ENCODE measurements at regions of chr7 and their contacts with region 1.

Region 1: GRCh38 chr7:26337232-26337865 is 45.7 kb downstream of the SNX10 start:
- DNase-seq: no peak

Region 2: DNA sequence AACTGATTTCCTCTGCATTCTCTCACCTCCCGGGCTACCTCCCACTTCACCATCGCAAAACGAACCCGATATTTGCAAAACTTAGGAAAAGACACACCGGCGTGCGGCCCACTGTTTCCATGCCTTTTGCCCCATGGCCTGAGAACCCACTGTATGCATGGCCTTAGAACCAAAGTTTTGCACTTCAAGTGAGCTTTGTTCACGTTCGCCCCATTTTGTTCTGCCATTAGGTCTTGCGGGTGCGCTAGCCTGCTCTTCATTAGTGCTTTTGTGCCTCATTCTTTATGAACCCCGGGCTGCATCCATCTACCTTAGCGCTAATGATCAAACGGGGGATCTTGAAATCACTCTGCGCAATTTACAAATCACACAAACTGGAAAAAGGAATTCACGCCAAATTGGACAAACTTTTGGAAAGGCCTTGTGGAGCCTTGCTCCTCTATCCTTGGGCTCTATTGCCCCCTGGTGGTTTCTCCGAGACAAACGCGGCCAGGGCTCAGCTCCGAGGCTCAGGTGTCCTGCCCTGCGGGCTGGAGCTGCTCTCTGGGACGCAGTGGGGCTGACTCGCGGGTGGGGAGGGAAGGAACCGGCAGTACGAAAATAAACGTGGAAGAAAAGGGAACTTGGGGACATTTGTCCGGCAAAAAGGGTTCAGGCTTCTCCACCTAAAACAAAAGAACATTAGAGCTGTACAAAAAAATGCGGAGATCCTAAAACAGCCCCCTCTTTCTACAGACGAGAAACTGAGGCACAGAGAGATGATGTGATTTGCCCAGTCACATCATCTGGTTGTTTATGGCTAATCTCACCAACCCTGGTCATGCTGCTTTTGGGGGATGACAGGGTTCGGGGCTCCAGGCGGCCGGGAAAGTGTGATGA is 485.8 kb before region 1 on chr7:
- CTCF ChIA-PET with region 1: no interaction called
- POLR2A ChIA-PET with region 1: no interaction called
- DNase-seq: peak; percentile 70

Region 3: DNA sequence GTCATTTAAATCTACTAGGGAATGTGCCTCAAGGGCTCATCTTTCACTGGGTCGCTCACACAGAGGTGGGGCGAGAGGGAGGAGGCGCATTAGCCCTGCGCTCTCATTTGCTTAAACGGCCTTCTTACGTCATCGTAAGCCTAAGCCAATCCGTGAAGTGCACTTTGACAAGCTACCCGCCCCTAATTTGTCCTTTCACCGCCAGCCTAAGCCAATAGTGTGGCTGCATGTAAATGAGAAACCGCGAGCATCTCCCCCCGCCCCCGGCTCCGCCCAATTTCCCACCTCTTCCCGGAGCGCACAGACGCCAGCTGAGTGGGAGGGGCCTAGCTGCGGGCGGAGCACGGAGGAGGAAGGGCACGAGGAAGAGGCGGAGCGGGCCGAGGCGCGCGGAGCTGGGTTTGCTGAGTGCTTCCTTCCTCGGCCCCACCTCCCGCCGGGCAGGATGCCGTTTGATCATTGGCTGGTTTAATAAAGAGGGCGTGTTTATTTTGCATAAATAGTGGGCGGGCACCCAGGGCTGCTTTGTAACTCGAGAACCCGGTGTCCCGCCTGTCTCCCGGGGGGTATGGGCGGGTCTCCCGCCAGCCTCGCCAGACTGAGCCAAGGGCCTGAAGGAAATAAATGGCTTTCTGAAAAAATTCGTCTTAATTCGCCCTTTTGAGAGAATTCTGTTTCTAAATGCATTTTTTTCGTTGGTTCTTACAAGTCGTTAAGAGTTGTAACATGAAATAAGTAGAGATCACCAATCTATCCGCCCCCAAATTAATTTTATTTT is 474.9 kb before region 1 on chr7:
- CTCF ChIA-PET with region 1: interaction called, 11 read pairs
- POLR2A ChIA-PET with region 1: no interaction called
- DNase-seq: peak; percentile 94

Region 4: GRCh38 chr7:26061688-26062150 is 275.6 kb before region 1 on chr7:
- CTCF ChIA-PET with region 1: no interaction called
- POLR2A ChIA-PET with region 1: no interaction called
- DNase-seq: peak; percentile 78

Region 5: DNA sequence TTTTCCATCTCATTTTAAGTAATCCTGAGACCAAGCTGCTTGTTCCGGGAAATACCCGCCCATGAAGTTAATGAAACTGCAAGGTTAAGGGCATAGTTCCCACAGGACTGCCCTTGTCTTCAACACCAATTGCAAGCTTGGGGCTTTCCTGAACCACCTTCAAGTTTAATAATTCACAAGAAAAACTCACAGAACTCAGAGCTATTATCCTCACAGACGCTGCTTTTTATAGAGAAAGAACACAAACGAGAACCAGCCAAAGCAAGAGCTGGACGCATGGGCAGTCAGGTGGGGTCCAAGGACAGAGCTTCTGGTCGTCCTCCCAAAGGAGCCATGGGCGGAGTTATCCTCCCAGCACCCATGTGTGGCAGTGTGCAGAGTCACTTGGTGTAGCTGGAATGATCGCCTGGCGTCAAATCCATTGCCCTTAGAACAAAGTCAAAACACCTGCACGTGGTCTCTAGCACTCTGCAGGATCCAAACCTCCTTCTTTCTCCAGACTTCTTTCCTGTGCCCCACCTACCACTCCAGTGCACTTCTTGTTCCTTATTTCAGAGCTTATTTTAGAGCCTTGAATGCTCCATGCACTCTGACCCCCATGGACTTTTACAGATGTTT is 11.0 kb after region 1 on chr7:
- CTCF ChIA-PET with region 1: no interaction called
- POLR2A ChIA-PET with region 1: no interaction called
- DNase-seq: no peak

Region 6: DNA sequence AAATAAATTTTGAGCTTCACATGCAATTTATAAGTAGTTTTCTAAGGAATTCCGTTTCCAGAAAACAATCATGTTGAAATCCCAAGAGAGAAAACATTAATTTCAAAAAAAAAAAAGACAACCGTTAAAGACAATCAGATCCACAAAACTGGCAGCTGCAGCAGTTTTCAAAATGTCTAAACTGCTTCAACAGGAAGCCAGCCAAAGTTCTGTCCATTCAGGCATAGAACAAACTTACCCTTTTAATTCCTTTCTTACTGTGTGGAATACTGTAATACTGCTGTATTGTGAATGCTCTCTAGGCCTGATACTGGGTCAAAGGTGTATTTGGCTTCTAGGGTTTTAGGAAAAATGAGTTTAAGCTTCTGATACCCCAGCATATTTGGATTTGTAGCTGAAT is 726.8 kb after region 1 on chr7:
- CTCF ChIA-PET with region 1: no interaction called
- POLR2A ChIA-PET with region 1: no interaction called
- DNase-seq: no peak